ENCODE measurements at regions of chr4 and their contacts with region 1.

Region 1: DNA sequence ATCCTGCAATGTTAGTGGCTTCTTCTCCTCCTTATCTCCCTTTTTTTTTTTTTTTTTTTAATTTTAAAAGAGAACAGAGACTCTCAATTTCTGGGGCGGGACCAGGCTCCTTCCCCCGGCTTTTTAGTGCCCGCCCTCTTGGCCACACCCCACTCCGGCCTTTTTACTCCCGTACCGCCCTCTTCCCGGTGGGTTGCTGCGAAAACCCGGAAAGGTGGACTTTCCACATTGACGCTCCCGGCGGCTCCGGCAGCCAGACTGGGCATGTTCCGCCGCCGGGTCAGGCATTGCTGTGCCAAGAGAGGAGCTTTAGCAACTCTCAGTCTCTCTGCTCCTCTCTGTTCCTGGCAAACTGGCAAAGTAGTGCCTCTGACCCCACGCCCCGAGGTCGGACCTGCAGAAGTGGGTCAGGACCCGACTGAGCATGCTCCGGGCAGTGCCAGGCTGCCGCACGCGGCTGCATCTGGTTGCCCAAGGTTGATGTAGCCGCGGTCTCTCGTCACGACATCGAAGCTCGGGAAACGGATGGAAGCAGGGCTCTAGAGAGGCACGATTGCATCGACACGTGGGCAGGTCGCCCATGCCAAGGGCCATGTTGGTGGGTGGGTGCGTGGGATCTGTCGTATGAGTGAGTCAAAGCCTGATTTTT is 1.1 kb upstream of the MFAP3L start:
- DNase-seq: peak; percentile 95

Region 2: DNA sequence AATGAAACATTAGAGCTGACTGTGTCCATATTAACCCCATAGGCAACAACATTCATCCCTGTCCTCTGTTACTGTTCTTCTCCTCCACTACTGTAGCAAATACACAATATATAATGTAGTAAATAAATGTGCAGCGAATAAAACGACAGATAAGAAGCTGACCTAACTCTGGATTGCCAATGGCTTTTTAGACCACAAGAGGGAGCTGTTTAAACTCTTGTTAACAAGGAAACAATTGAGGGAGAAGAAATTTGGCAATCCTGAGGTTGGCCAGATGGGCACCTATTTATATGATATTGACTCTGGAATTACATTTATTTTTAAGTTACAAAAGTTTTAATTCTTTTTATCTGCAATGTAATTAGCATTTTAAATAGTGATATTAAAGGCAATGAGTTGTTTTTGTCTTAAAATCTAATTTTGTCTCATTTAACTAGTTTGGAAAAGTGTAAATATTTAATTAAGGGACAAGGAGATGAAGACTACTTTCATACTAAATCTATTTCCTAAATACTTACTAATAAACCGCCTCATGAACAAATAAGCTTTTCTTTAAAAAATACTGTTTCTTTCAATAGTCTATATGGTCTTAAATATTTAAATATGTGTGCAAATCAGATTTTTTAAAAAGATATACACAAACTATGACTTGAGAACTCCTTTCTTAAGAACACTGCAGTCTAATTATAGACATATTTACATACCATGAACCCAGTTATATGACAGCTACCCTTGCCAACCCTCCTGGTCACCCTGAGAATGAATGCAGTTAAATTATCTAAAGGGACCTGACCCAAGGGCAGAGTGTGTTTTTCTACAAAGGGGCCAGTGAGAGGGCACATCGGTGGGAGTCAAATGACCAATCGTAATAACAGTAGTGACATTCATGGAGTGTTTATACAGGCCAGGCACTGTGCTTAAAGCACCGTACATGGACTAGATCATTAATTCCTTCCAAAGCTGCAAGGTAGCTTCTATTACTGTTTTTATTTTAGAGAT is 216.7 kb before region 1 on chr4:
- in situ Hi-C with region 1: loop called (anchors 25 kb)
- DNase-seq: peak; percentile 89

Region 3: DNA sequence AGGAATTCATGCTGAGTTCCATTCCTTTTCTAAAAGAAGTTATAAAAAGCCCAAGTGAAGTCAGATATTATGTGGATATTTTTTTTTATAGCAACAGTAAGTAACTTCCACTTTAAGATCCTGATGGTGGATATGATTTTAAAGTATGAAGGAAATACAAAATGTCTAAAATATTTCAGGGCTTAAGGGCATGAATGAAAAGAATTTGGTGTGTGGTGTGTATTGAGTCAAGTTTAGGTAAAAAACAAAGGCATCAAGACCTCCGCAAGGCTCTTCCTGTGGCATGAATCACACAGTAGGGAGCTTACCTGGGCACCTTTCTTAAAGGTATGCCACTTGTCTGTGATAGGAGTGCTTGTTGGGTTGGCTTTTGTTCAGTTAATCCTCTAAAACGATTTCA is 324.9 kb after region 1 on chr4:
- in situ Hi-C with region 1: no loop called
- DNase-seq: no peak

Measured in SK-MEL-5 (cell line).